Activated B cell treated with CpG ODN at 0.5 μM for 24 hours (primary cell): ENCODE measurements at regions of chr1 and their contacts with region 1.

Region 1: GRCh38 chr1:8560611-8561544 is 243.0 kb downstream of the SLC45A1 start:
- DNase-seq: no peak
- ATAC-seq: peak; percentile 89
- H3K4me3 Mint-ChIP-seq: peak overlapping the region; percentile 7
- H3K27ac Mint-ChIP-seq: peak overlapping the region; percentile 54
- H3K4me1 Mint-ChIP-seq: peaks cover 40% of the 10 kb centered on the region
- H3K27me3 Mint-ChIP-seq: no peaks in the 10 kb centered on the region
- CTCF ChIP-seq: peak; percentile 65

Region 2: DNA sequence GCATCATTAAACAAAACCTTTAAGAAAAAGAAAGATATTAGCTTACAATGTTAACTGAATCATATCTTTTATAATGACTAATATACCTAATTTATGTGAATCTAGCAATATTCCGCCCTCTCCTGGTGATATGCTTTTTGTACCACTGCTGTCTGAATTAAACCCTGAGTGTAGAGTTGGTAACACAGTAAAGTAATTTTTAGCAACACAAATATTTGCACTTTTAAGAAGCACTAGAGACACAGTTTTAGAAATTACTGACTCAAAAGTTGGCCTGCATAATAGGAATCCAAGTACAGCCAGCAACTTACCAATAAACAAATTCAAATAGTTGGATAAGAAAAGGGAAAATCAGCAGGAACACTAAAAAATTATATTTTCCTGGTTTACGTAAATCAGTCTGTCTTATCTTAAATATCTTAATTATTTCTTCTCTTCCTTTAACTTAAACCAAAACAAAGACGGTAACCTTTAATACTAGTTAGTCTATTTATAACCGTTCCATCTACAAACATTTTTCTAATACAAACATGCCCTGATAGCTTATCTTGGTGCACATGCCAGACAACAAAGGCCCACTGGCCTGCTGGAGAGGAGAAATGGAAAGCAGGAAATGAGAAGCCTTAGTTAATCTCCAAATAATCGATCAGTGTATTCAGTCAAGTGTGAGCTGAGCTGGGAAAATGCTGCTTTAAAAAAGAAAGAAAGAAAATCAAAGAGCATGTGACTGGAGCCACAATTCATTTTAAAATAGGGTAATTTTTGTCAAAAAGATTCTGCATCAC is 10.5 kb after region 1 on chr1:
- CTCF ChIA-PET with region 1: interaction called, 16 read pairs
- POLR2A ChIA-PET with region 1: no interaction called
- intact Hi-C with region 1: no loop called
- DNase-seq: no peak
- ATAC-seq: no peak
- H3K4me3 Mint-ChIP-seq: no peak overlapping the region
- H3K27ac Mint-ChIP-seq: no peak overlapping the region
- H3K4me1 Mint-ChIP-seq: peaks cover 11% of the 10 kb centered on the region
- H3K27me3 Mint-ChIP-seq: no peaks in the 10 kb centered on the region
- CTCF ChIP-seq: no peak

Region 3: GRCh38 chr1:8629241-8630091 is 68.6 kb after region 1 on chr1:
- CTCF ChIA-PET with region 1: interaction called, 6 read pairs
- POLR2A ChIA-PET with region 1: interaction called, 6 read pairs
- intact Hi-C with region 1: loop called (anchors 5 kb)
- DNase-seq: no peak
- ATAC-seq: peak; percentile 84
- H3K4me3 Mint-ChIP-seq: peak overlapping the region; percentile 73
- H3K27ac Mint-ChIP-seq: peak overlapping the region; percentile 92
- H3K4me1 Mint-ChIP-seq: peaks cover 94% of the 10 kb centered on the region
- H3K27me3 Mint-ChIP-seq: no peaks in the 10 kb centered on the region
- CTCF ChIP-seq: no peak

Region 4: DNA sequence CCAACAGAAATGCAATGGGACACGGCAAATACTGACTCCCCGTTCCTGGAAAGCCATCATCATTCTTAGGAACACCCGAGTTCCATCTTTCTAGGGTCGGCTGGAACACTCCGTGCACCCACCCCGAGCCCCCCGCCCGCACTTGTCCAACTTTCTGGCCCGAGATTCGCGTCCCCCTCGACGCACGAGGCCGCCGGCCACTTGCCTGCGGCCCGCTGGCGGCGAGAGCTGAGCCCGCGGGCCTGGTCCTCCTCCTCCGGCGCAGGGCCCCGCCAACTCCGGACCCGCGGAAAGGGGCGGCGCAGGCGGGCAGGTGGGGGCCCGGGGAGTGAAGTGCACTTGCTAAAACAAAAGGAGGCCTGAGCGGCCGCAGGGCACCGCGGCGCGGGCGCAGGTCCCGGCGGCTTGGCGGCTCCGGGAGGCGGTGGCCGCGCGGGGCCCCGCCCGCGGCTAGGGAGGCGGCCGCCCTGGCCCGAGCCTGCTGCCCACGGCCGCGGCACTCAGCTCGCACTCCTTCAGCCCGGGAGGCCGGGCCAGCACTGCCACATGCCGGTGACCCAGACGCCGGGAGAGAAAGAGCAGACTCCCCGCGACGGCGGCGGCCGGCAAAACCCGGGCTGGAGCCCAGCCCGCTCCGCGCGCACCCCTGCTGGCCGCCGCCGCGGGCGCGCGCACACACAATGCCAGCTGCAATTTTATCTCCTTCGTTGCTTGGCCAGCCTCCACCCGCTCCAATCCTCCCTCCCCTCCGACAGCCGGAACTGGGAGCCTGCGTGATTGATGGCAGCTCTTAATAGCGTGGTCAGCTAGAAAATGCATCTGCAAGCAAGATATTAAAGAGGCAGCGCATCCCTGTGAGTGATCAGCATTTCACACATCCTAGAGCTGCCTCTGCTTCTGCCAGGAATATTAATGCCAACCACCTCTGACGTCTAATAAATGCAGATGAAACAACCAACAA is 142.3 kb after region 1 on chr1:
- CTCF ChIA-PET with region 1: interaction called, 15 read pairs
- POLR2A ChIA-PET with region 1: interaction called, 3 read pairs
- intact Hi-C with region 1: no loop called
- DNase-seq: peak; percentile 78
- ATAC-seq: peak; percentile 79
- H3K4me3 Mint-ChIP-seq: peak overlapping the region; percentile 89
- H3K27ac Mint-ChIP-seq: peak overlapping the region; percentile 83
- H3K4me1 Mint-ChIP-seq: peaks cover 56% of the 10 kb centered on the region
- H3K27me3 Mint-ChIP-seq: no peaks in the 10 kb centered on the region
- CTCF ChIP-seq: no peak